Left ventricle myocardium superior (tissue), 1 donor: ENCODE measurements at regions of chr4 and their contacts with region 1.

Region 1: GRCh38 chr4:149897783-149898182 is 82.1 kb upstream of the IQCM start:
- DNase-seq: no peak
- ATAC-seq: peak; percentile 37

Region 2: DNA sequence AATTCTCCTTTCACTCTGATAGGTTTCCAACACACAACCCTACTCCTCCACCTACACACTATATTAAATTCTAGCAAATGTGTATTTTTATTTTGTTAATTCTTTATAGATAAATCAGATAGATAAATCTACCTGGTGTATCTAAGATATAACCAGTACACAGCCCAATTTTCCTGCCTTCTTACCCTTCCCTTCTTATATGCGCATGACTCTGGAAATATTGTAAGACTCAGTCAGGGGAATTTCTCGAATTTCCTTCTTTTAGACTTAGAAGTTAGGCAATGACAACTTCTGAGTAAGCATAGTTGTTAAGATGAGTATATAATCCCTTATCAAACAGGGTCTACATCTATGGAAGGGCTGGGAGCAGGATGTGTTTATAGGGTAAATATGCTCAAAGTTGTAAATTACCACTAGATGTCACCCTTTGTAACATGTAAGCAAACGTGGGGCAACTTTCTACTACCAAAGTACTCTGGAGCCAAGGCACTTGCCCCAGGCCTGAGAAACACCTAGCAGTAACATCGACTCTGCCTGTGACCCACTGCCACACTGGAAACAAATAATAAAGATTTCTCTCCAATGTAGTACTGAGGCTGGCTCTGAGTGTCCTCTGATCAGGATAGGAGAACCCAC is 526.9 kb before region 1 on chr4:
- intact Hi-C with region 1: loop called (anchors 5 kb)
- DNase-seq: no peak
- ATAC-seq: peak; percentile 66